ENCODE measurements at regions of chr2 and their contacts with region 1.

Region 1: DNA sequence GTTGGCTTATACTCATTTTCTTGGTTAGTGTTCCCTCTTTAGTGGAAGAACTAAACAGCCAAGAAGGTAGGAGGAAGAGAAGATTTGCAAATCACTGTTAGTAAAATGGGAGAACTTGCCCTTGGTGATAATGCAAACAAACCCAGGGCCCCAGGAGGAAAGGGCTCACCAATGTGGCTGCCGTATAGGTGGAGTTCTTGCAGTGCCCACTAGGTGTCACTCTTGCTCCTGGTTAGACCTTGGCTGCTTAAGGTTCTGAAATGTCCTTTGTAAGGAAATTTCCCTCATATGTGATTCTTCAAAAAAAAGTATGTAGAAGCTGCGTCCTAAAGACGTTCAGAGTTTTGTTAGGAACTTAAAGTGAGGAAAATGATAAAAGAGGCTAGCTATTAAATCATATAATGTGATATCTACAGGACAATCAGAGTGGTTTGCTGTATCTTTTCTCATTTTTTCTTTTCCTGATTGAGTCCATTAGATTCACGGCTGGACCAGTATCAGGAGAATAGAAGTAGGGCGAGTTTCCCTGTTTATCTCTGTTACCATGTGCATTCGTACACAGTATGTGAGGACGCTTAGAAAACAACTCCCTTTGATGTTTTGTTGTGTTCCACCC is 48.6 kb downstream of the RPIA start:
- DNase-seq: peak; percentile 51
- H3K4me3 ChIP-seq: no peak overlapping the region
- H3K27ac ChIP-seq: no peak overlapping the region
- H3K27me3 ChIP-seq: no peaks in the 10 kb centered on the region
- CTCF ChIP-seq: peak; percentile 96

Region 2: GRCh38 chr2:88265349-88266303 is 474.5 kb before region 1 on chr2:
- CTCF ChIA-PET with region 1: no interaction called
- POLR2A ChIA-PET with region 1: no interaction called
- DNase-seq: no peak
- H3K4me3 ChIP-seq: no peak overlapping the region
- H3K27ac ChIP-seq: no peak overlapping the region
- H3K27me3 ChIP-seq: no peaks in the 10 kb centered on the region
- CTCF ChIP-seq: no peak

Region 3: GRCh38 chr2:88714667-88715066 is 25.4 kb before region 1 on chr2:
- CTCF ChIA-PET with region 1: interaction called, 13 read pairs
- POLR2A ChIA-PET with region 1: no interaction called
- DNase-seq: no peak
- H3K4me3 ChIP-seq: no peak overlapping the region
- H3K27ac ChIP-seq: no peak overlapping the region
- H3K27me3 ChIP-seq: no peaks in the 10 kb centered on the region
- CTCF ChIP-seq: no peak

Region 4: GRCh38 chr2:88723193-88723592 is 16.9 kb before region 1 on chr2:
- CTCF ChIA-PET with region 1: interaction called, 22 read pairs
- POLR2A ChIA-PET with region 1: no interaction called
- DNase-seq: no peak
- H3K4me3 ChIP-seq: no peak overlapping the region
- H3K27ac ChIP-seq: no peak overlapping the region
- H3K27me3 ChIP-seq: no peaks in the 10 kb centered on the region
- CTCF ChIP-seq: no peak

Region 5: GRCh38 chr2:88753833-88754584 is 13.9 kb after region 1 on chr2:
- CTCF ChIA-PET with region 1: interaction called, 35 read pairs
- POLR2A ChIA-PET with region 1: no interaction called
- DNase-seq: no peak
- H3K4me3 ChIP-seq: no peak overlapping the region
- H3K27ac ChIP-seq: peak overlapping the region; percentile 11
- H3K27me3 ChIP-seq: no peaks in the 10 kb centered on the region
- CTCF ChIP-seq: no peak

Region 6: DNA sequence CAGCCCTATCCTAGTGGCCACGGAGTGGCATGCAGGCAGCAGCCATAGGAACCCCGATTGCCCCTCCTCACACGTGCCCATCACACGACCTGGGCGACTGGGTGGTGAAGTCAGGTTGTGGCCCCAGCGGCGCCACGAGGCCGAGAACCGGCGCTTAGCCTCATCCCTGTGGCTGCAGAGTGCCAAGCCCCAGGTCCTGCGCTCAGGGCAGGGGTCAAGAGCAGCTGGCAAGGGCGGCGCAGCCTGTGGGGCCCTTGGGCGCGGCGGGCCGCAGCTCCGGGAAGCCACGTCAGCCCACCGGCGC is 24.7 kb after region 1 on chr2:
- CTCF ChIA-PET with region 1: no interaction called
- POLR2A ChIA-PET with region 1: no interaction called
- DNase-seq: no peak
- H3K4me3 ChIP-seq: no peak overlapping the region
- H3K27ac ChIP-seq: no peak overlapping the region
- H3K27me3 ChIP-seq: peaks cover 9% of the 10 kb centered on the region
- CTCF ChIP-seq: no peak